CD4-positive, alpha-beta memory T cell (primary cell): ENCODE measurements at regions of chr11 and their contacts with region 1.

Region 1: DNA sequence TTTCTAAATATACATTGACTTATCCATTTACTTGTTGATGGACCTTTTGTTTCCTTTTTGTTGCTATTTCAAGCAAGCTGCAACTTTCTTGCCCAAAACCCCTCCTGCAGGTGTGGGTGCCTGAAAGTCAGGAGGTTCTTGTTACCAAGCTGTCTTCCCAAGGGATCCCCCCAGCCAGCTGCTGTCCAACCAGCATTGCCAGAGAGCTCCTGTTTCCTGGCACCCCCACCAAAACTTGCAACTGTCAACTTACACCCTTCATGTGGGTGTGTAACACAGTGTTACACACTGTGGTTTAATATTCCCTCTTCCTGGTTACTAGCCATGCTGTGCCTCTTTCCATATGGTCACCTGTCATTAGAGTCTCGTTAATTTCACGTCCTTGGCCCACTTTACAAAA is 1.6 kb upstream of the KRTAP5-1 start:
- DNase-seq: no peak
- H3K4me3 ChIP-seq: no peak overlapping the region
- H3K4me3 Mint-ChIP-seq: peak overlapping the region in 2 of 8 donors; percentile 18 to 38
- H3K27ac ChIP-seq: no peak overlapping the region
- H3K27ac Mint-ChIP-seq: peak overlapping the region in 5 of 7 donors; percentile 26 to 86 (median 47)
- H3K4me1 ChIP-seq: peaks cover 38% of the 10 kb centered on the region
- H3K4me1 Mint-ChIP-seq: peaks cover 25 to 46% (median 33%) of the 10 kb centered on the region in 4 donors
- H3K27me3 ChIP-seq: no peaks in the 10 kb centered on the region
- H3K27me3 Mint-ChIP-seq: no peaks in the 10 kb centered on the region

Region 2: GRCh38 chr11:1608363-1608762 is 21.7 kb after region 1 on chr11 and contains the start of gene KRTAP5-3:
- CTCF ChIA-PET with region 1: interaction called, 3 read pairs
- POLR2A ChIA-PET with region 1: interaction called, 6 read pairs
- intact Hi-C with region 1: loop called (anchors 1 kb)
- DNase-seq: no peak
- H3K4me3 ChIP-seq: no peak within 1 kb of the TSS
- H3K4me3 Mint-ChIP-seq: no peak within 1 kb of the TSS
- H3K27ac ChIP-seq: no peak within 1 kb of the TSS
- H3K27ac Mint-ChIP-seq: peak within 1 kb of the TSS in 3 of 7 donors; percentile 15 to 56 (median 19)
- H3K4me1 ChIP-seq: peaks cover 11% of the 10 kb centered on the region
- H3K4me1 Mint-ChIP-seq: peaks cover 6 to 20% (median 9%) of the 10 kb centered on the region in 4 donors
- H3K27me3 ChIP-seq: no peaks in the 10 kb centered on the region
- H3K27me3 Mint-ChIP-seq: peaks cover 6 to 9% of the 10 kb centered on the region in 2 donors
- total RNA-seq, gene KRTAP5-3: not detected